T-cell (primary cell): ENCODE measurements at regions of chr7 and their contacts with region 1.

Region 1: GRCh38 chr7:17474724-17475344 is 176.4 kb downstream of the AHR start:
- DNase-seq: no peak
- ATAC-seq: no peak
- H3K4me3 ChIP-seq: no peak overlapping the region
- H3K4me3 Mint-ChIP-seq: no peak overlapping the region
- H3K27ac ChIP-seq: no peak overlapping the region
- H3K27ac Mint-ChIP-seq: no peak overlapping the region
- H3K4me1 ChIP-seq: no peaks in the 10 kb centered on the region
- H3K4me1 Mint-ChIP-seq: no peaks in the 10 kb centered on the region
- H3K27me3 ChIP-seq: no peaks in the 10 kb centered on the region
- H3K27me3 Mint-ChIP-seq: no peaks in the 10 kb centered on the region

Region 2: GRCh38 chr7:17462034-17462695 is 12.7 kb before region 1 on chr7:
- CTCF ChIA-PET with region 1: interaction called in 1 of 2 experiments, 3 read pairs
- POLR2A ChIA-PET with region 1: interaction called in 1 of 2 experiments, 10 read pairs
- DNase-seq: no peak
- ATAC-seq: no peak
- H3K4me3 ChIP-seq: no peak overlapping the region
- H3K4me3 Mint-ChIP-seq: no peak overlapping the region
- H3K27ac ChIP-seq: no peak overlapping the region
- H3K27ac Mint-ChIP-seq: no peak overlapping the region
- H3K4me1 ChIP-seq: peaks cover 4 to 29% of the 10 kb centered on the region in 2 experiments
- H3K4me1 Mint-ChIP-seq: peaks cover 16 to 22% (median 21%) of the 10 kb centered on the region in 3 donors
- H3K27me3 ChIP-seq: no peaks in the 10 kb centered on the region
- H3K27me3 Mint-ChIP-seq: no peaks in the 10 kb centered on the region